HCT116 (cell line): ENCODE measurements at regions of chr9 and their contacts with region 1.

Region 1: DNA sequence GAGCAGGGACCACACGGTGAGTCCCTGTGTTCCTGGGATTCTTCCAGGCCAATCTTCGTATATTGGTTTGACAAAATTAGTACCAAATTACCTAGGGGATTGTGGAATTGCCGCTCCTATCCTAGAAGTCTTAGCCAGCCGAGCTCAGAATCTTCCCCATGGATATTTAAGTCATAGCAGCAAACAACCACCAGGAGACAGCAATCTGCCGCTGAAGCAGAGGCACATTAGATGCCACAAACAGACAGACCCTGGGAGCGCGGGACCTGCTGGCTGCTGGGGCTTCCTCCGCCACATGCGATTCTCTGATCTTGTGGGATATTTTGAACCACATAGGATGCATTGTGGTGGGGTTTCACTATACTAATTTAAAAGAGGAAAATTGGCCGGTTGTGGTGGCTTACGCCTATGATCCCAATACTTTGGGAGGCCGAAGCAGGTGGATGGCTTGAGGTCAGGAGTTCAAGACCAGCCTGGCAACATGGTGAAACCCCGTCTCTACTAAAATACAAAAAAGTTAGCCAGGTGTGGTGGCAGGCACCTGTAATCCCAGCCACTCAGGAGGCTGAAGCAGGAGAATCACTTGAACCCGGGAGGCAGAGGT is 31.7 kb upstream of the ZBTB43 start:
- DNase-seq: no peak
- ATAC-seq: peak; percentile 66
- H3K4me3 ChIP-seq: no peak overlapping the region
- H3K27ac ChIP-seq: no peak overlapping the region
- H3K4me1 ChIP-seq: peaks cover 0 to 5% of the 10 kb centered on the region in 2 experiments; a peak in 2 of 4 replicates
- H3K27me3 ChIP-seq: no peaks in the 10 kb centered on the region
- CTCF ChIP-seq: peak in 2 of 3 experiments; percentile 60 to 66; a peak in 4 of 6 replicates
- POLR2A ChIP-seq: no peak
- RAD21 ChIP-seq: peak; percentile 26; the same call in 1 of the 2 replicates

Region 2: DNA sequence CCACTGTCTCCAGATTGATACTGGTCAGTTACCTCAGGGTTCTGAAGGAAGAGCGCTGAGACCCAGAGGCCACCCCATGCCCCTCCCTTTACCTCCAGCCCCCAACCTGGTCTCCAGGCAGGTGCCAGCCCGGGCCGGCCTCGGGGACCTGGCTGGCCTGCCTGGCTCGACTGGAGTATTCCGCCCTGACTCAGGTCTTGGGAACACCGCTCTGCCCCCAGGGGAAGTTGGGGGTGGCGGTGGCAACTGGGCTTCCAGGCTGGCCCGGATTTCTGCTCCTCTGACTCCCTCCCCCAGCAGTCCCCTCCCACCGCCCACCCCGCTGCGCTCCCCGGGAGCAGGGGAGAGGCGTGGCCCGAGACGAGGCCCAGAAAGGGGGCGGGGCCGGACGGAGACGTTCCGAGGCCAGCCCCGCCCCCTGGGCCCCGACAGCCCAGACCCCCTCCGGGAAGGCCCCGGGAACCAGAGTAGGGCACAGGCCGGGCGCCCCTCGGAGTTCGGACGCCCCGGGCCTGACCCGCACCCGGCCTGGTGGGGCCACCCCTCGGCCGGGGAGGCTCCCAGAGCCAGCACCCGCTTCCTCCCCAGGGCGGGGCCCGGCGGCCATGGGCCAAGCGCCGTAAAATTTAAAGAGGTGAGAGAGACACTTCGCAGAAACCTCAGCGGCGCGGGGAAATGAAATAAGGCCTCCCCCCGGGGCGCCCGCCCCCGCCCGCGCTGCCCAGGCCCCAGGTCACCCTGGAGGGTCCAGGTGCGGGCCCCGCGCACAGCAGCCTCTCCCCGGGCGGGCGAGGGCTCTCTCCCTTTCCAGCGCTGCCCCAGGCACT is 50.6 kb before region 1 on chr9:
- CTCF ChIA-PET with region 1: interaction called, 3 read pairs
- POLR2A ChIA-PET with region 1: no interaction called
- RAD21 ChIA-PET with region 1: no interaction called
- intact Hi-C with region 1: loop called (anchors 5 kb)
- DNase-seq: peak; percentile 36
- ATAC-seq: peak; percentile 89
- H3K4me3 ChIP-seq: peak overlapping the region; percentile 54 to 68
- H3K27ac ChIP-seq: peak overlapping the region; percentile 66
- H3K4me1 ChIP-seq: peaks cover 19 to 35% of the 10 kb centered on the region in 2 experiments
- H3K27me3 ChIP-seq: no peaks in the 10 kb centered on the region
- CTCF ChIP-seq: no peak
- POLR2A ChIP-seq: no peak
- RAD21 ChIP-seq: no peak

Region 3: GRCh38 chr9:126794441-126794840 is 21.3 kb after region 1 on chr9:
- CTCF ChIA-PET with region 1: no interaction called
- POLR2A ChIA-PET with region 1: no interaction called
- RAD21 ChIA-PET with region 1: no interaction called
- intact Hi-C with region 1: no loop called
- DNase-seq: no peak
- ATAC-seq: no peak
- H3K4me3 ChIP-seq: no peak overlapping the region
- H3K27ac ChIP-seq: no peak overlapping the region
- H3K4me1 ChIP-seq: peaks cover 0 to 16% of the 10 kb centered on the region in 2 experiments; a peak in 1 of 4 replicates
- H3K27me3 ChIP-seq: no peaks in the 10 kb centered on the region
- CTCF ChIP-seq: no peak
- POLR2A ChIP-seq: no peak
- RAD21 ChIP-seq: no peak

Region 4: GRCh38 chr9:126860077-126860756 is 87.1 kb after region 1 on chr9 and contains the start of gene ZBTB34:
- CTCF ChIA-PET with region 1: no interaction called
- POLR2A ChIA-PET with region 1: no interaction called
- RAD21 ChIA-PET with region 1: no interaction called
- intact Hi-C with region 1: no loop called
- DNase-seq: peak; percentile 6
- ATAC-seq: peak; percentile 79
- H3K4me3 ChIP-seq: peak within 1 kb of the TSS; percentile 57 to 89
- H3K27ac ChIP-seq: peak within 1 kb of the TSS; percentile 90
- H3K4me1 ChIP-seq: peaks cover 7 to 20% of the 10 kb centered on the region in 2 experiments; a peak in 3 of 4 replicates
- H3K27me3 ChIP-seq: no peaks in the 10 kb centered on the region
- CTCF ChIP-seq: peak; percentile 54 to 97 (median 94)
- POLR2A ChIP-seq: no peak
- RAD21 ChIP-seq: no peak; the same call in 1 of the 2 replicates
- total RNA-seq, gene ZBTB34: 5.6 TPM

Region 5: DNA sequence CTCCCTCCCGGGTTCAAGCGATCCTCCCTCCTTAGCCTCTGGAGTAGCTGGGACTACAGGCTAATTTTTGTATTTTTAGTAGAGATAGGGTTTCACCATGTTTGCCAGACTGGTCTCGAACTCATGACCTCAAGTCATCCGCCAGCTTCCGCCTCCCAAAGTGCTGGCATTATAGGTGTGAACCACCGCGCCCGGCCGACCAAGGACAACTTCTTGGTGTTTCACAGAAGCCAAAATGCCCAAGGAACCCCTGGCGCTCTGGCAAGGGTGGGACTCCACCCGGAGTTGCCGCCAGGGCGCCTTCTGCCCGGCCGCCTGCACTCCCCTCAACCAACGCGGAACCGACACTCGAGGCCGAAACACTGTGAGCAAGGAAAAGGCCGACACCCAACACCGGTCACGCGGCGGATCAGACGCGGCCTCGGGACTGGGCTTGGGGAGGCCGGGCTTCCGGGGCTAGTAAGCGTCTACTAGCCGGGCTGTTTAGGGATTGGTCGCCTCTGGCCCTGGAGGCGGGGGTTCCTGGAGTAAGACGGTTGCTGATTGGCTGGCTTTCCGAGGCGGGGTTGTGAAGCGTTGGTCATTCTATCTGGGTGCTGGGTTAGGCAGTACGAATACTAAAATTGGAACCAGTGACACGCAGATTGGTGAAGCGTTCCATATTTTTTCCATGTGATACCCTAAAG is 926.0 kb after region 1 on chr9:
- CTCF ChIA-PET with region 1: no interaction called
- POLR2A ChIA-PET with region 1: no interaction called
- RAD21 ChIA-PET with region 1: no interaction called
- intact Hi-C with region 1: no loop called
- DNase-seq: peak; percentile 96
- ATAC-seq: peak; percentile 98
- H3K4me3 ChIP-seq: peak overlapping the region; percentile 28 to 59
- H3K27ac ChIP-seq: peak overlapping the region; percentile 58
- H3K4me1 ChIP-seq: peaks cover 20 to 38% of the 10 kb centered on the region in 2 experiments
- H3K27me3 ChIP-seq: no peaks in the 10 kb centered on the region
- CTCF ChIP-seq: no peak
- POLR2A ChIP-seq: peak; percentile 54
- RAD21 ChIP-seq: no peak